Heart right ventricle (tissue), 16 donors: ENCODE measurements at regions of chr6 and their contacts with region 1.

Region 1: GRCh38 chr6:136123468-136123867 is 126.6 kb downstream of the MTFR2 start:
- DNase-seq: no peak
- ATAC-seq: no peak
- H3K4me3 ChIP-seq: no peak overlapping the region
- H3K27ac ChIP-seq: peak overlapping the region in 3 of 10 donors; percentile 3 to 43 (median 6)
- H3K4me1 ChIP-seq: peaks cover 0 to 46% (median 25%) of the 10 kb centered on the region in 9 donors
- H3K27me3 ChIP-seq: no peaks in the 10 kb centered on the region
- CTCF ChIP-seq: no peak

Region 2: DNA sequence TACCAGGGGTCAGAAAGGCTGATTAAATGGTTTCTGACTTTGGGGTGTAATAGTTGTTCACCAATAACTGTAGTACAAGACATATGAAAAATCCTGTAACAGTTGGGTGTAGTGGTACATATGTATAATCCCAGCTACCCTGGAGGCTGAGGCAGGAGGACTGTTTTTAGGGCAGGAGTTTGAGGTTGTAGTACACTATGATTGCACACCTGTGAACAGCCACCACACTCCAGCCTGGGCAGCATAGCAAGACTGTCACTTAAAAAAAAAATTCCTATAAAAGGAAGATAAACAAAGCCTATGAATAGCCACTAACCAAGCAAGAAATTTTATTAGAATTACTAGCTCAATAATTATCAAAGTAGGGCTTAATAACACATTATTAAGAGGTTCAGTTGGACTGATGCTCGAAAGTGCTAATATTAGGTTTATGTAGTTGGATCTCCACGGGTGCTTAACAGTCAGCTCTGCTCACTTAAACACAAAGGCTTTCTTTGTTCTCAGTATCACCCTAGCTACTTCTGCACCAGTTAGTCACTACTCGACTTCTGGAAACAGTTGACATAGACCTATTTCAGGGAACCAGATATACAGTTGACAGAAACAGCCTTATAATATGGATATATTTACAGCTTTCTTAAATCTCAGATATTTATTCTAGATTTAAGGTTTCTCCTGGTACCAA is 13.7 kb after region 1 on chr6:
- intact Hi-C with region 1: loop called in 1 of 10 experiments (anchors 1 kb)
- DNase-seq: no peak
- ATAC-seq: peak; percentile 53 to 98 (median 89)
- H3K4me3 ChIP-seq: no peak overlapping the region
- H3K27ac ChIP-seq: peak overlapping the region in 7 of 10 donors; percentile 5 to 62 (median 37)
- H3K4me1 ChIP-seq: peaks cover 0 to 36% (median 15%) of the 10 kb centered on the region in 9 donors
- H3K27me3 ChIP-seq: no peaks in the 10 kb centered on the region
- CTCF ChIP-seq: no peak

Region 3: GRCh38 chr6:136173519-136174507 is 50.3 kb after region 1 on chr6:
- intact Hi-C with region 1: loop called in 1 of 10 experiments (anchors 10 kb)
- DNase-seq: peak; percentile 30 to 53
- ATAC-seq: peak; percentile 82 to 96 (median 89)
- H3K4me3 ChIP-seq: peak overlapping the region in 2 of 10 donors; percentile 9 to 19
- H3K27ac ChIP-seq: peak overlapping the region in 9 of 10 donors; percentile 12 to 79 (median 70)
- H3K4me1 ChIP-seq: peaks cover 0 to 22% (median 17%) of the 10 kb centered on the region in 9 donors
- H3K27me3 ChIP-seq: no peaks in the 10 kb centered on the region
- CTCF ChIP-seq: no peak